Activated CD4-positive, alpha-beta T cell treated with anti-CD3 and anti-CD28 coated beads for 36 hours (primary cell): ENCODE measurements at regions of chr2 and their contacts with region 1.

Region 1: GRCh38 chr2:170973492-170974303 is 44.6 kb downstream of the GORASP2 start:
- DNase-seq: peak; percentile 93
- ATAC-seq: peak; percentile 93
- H3K4me3 Mint-ChIP-seq: peak overlapping the region; percentile 67
- H3K27ac Mint-ChIP-seq: peak overlapping the region; percentile 80
- H3K4me1 Mint-ChIP-seq: peaks cover 10% of the 10 kb centered on the region
- H3K27me3 Mint-ChIP-seq: no peaks in the 10 kb centered on the region

Region 2: GRCh38 chr2:170523506-170523905 is 450.2 kb before region 1 on chr2:
- CTCF ChIA-PET with region 1: no interaction called
- POLR2A ChIA-PET with region 1: no interaction called
- intact Hi-C with region 1: no loop called
- DNase-seq: no peak
- ATAC-seq: no peak
- H3K4me3 Mint-ChIP-seq: no peak overlapping the region
- H3K27ac Mint-ChIP-seq: no peak overlapping the region
- H3K4me1 Mint-ChIP-seq: no peaks in the 10 kb centered on the region
- H3K27me3 Mint-ChIP-seq: peaks cover 3% of the 10 kb centered on the region

Region 3: DNA sequence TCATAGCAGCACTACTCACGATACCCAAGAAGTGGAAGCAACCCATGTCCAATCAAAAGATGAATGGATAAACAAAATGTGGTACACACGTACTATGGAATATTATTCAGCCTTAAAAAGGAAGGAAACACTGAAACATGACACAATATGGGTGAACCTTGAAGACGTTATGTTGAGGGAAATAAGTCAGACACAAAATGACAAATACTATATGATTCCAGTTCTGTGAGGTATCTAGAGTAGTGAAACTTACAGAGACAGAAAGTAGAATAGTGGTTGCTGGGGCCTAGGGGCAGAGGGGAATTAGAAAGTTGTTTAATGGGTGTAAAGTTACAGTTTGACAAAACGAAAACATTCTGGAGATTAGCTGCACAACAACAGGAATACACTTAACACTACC is 162.3 kb after region 1 on chr2:
- CTCF ChIA-PET with region 1: interaction called, 4 read pairs
- POLR2A ChIA-PET with region 1: no interaction called
- intact Hi-C with region 1: loop called in 1 of 2 experiments (anchors 5 kb)
- DNase-seq: peak; percentile 41
- ATAC-seq: peak; percentile 93
- H3K4me3 Mint-ChIP-seq: peak overlapping the region; percentile 20
- H3K27ac Mint-ChIP-seq: peak overlapping the region; percentile 86
- H3K4me1 Mint-ChIP-seq: peaks cover 73% of the 10 kb centered on the region
- H3K27me3 Mint-ChIP-seq: no peaks in the 10 kb centered on the region

Region 4: GRCh38 chr2:171244970-171245782 is 271.5 kb after region 1 on chr2:
- CTCF ChIA-PET with region 1: interaction called, 4 read pairs
- POLR2A ChIA-PET with region 1: no interaction called
- intact Hi-C with region 1: loop called (anchors 1 to 5 kb)
- DNase-seq: no peak
- ATAC-seq: no peak
- H3K4me3 Mint-ChIP-seq: no peak overlapping the region
- H3K27ac Mint-ChIP-seq: no peak overlapping the region
- H3K4me1 Mint-ChIP-seq: peaks cover 42% of the 10 kb centered on the region
- H3K27me3 Mint-ChIP-seq: no peaks in the 10 kb centered on the region

Region 5: DNA sequence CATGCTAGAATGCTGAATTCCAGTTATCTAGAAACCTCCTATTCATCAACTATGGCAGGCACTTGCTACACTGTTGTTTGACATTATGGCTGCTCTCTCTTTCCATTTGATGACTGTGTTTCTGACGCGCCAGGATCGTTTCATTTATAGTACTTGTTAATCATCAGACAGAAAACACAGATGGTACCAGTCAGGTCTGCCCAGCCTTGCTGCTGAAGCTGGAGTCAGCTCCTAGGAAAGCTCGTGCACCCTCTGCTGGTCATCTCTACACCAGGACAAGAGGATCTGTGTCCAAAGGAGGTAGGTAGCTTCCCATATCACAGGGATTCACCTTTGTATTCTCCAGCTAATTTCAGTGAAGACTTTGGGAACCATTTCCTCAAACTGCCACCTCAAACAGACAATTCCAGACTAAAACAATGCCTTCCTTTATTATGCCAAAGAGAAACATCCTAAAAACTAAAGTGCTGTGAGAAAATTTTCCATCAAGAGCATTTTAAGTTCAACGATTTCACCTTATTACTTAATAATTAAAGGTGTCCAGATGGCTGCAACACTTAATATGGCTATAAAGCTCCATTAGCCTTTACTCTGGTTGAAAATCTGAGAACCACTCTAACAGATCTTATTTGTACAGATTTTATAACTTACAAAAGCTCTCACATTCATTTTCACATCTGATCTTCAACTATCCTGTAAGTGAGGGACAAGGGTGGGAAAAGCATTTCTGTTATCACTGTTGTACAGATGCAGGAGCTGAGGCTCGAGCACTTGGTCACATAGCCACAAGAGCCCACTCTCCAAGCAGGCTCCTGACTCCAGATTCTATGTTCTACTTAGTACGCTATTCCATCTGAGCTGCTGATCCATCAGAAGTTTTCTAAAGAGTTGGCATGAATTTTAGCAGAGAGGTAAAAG is 442.6 kb after region 1 on chr2:
- CTCF ChIA-PET with region 1: interaction called, 20 read pairs
- POLR2A ChIA-PET with region 1: no interaction called
- intact Hi-C with region 1: loop called (anchors 1 kb)
- DNase-seq: peak; percentile 93
- ATAC-seq: peak; percentile 98
- H3K4me3 Mint-ChIP-seq: peak overlapping the region; percentile 24
- H3K27ac Mint-ChIP-seq: peak overlapping the region; percentile 84
- H3K4me1 Mint-ChIP-seq: peaks cover 37% of the 10 kb centered on the region
- H3K27me3 Mint-ChIP-seq: no peaks in the 10 kb centered on the region

Region 6: DNA sequence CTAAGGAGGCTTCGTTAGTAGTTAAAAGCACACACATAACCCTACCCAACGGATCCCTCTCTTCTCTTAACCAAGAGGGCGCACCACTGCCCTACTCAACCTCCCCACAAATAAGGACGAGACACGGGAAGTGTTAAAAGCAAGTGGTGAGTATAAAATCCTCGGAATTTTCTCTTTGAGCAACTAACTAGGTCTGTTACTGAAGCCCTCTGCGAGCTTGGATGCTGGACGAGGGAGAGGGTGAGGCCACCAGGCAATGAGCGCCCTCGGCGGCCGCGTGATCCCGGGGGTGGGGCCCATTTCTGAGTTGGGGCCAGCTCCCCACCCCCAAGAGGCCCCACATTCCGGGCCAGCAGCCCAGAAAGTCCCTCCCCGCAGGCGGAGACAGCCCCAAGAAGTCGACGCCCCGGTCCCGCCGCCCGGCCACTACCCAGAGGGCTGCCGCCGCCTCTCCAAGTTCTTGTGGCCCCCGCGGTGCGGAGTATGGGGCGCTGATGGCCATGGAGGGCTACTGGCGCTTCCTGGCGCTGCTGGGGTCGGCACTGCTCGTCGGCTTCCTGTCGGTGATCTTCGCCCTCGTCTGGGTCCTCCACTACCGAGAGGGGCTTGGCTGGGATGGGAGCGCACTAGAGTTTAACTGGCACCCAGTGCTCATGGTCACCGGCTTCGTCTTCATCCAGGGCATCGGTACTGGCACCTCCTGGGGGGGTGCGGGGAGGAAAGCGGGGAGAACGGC is 548.5 kb after region 1 on chr2 and contains the start of gene CYBRD1:
- CTCF ChIA-PET with region 1: no interaction called
- POLR2A ChIA-PET with region 1: no interaction called
- intact Hi-C with region 1: loop called in 1 of 2 experiments (anchors 5 kb)
- DNase-seq: peak; percentile 48
- ATAC-seq: peak; percentile 48
- H3K4me3 Mint-ChIP-seq: peak within 1 kb of the TSS; percentile 77
- H3K27ac Mint-ChIP-seq: peak within 1 kb of the TSS; percentile 73
- H3K4me1 Mint-ChIP-seq: peaks cover 16% of the 10 kb centered on the region
- H3K27me3 Mint-ChIP-seq: peaks cover 43% of the 10 kb centered on the region
- total RNA-seq, gene CYBRD1: 0.74 to 1.4 TPM